HEK293T (cell line): ENCODE measurements at regions of chr20 and their contacts with region 1.

Region 1: GRCh38 chr20:63223221-63224207 is 7.6 kb upstream of the YTHDF1 start:
- DNase-seq: peak; percentile 58

Region 2: DNA sequence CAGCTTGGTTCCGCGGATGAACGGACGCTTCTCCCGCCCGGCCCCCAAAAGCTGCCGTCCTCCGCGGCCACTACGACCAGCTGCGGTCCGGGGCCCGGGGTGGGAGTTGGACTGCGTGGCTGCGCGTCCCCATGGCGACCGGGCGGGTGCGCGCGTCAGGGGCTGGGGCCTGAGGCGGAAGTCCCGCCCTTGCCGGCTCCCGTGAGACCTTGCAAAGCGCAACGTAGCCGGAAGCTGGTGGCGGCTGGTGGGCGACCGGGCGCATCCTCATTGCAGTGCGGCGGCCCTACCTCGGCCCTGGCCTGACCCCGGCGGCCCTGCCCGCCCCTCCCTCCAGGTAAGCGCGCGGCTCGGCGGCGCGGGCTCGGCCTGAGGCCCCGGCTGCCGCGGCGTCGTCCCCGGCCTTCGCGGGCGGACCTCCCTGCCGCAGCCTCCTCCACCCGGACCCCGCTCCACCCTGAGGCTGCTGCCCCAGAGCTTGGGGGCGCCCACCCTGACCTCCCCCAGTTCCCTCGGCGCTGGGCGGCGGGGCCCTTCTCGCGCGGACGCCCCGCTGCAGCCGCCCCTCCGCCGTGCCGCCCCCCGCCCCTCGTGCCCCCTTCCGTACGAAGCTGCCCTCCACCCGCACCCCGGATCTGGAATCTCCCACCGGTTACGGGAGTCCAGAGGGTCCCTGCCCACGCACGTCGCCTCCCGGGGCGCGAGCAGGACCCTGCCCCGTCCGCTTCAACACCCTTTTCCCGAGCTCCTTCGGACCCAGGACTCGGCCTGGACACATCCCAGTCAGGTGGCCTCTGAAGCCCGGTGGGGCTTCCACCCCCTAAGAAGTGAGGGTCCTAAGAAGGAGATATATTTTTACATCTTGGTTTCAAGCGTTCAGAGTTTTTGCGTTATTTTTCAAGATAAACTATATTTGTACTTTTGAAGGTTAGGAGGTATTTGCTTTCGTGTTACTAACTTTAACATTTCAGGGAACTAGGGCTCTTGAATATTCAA is 49.4 kb after region 1 on chr20 and contains the start of gene ARFGAP1:
- CTCF ChIA-PET with region 1: interaction called, 12 read pairs
- POLR2A ChIA-PET with region 1: interaction called, 5 read pairs
- DNase-seq: peak; percentile 98